ENCODE measurements at regions of chr9 and their contacts with region 1.

Region 1: DNA sequence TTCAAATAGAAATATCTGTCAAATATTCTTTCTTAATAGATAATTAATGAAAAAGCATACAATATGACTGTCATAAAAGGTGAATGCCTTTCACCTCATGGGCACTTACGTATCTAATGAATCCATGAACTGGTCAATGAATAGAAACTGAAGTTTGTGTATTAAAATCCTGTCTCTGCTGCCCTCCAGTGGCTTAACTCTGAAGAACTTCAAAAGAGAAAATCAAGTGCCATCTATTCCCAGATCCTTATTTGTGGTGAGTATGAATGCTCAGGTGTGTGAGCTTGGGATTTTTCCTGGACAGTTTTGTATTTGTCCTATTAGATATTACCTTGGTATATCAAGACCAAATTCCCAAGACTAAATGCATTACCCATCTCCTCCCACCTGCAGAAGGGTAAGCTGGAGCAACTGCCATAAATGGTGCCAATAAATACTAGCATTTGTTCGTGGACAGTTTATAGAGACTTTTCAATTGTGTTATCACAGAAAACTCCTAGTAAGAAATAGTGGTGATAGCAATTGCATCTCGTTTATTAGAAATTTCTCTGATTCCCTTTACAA is 44.0 kb upstream of the SVEP1 start:
- DNase-seq: peak; percentile 28
- ATAC-seq: peak; percentile 38
- H3K4me3 ChIP-seq: no peak overlapping the region
- H3K27ac ChIP-seq: no peak overlapping the region
- H3K4me1 ChIP-seq: peaks cover 6% of the 10 kb centered on the region
- H3K27me3 ChIP-seq: no peaks in the 10 kb centered on the region; a peak in 1 of 4 replicates
- CTCF ChIP-seq: peak; percentile 46 to 74 (median 55); a peak in 5 of 6 replicates
- EP300 ChIP-seq: no peak
- POLR2A ChIP-seq: no peak
- RAD21 ChIP-seq: peak; percentile 76

Region 2: DNA sequence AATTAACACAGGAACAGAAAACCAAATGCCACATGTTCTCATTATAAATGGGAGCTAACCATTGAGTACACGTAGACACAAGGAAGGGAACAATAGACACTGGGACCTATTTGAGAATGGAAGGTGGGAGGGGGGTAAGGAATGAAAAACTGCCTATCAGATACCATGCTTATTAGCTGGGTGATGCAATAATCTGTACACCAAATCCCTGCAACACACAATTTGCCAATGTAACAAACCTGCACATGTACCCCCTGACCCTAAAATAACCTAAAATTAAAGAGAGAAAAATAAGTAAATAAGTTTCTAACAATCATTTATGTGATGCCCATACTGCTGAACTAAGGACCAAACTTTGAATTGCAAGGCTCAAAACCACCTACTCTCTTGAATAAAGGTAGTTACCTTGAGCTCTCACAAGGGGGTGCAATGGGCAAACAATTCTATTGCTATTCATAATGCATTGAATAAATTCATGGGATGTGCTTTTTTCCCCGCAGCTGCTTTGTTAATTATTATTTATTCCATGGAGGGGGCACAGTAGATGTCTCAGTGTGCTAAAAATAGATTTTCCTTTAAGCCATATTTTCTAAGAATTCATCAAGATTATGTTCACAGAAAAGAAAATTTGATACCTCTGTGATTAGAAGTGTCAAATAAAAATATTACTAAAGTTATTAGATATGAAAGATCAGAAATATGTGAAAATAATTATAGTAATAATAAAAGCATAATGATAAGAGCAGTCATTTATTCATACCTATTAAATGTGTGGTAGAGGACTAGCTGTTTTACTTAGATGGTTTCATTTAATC is 1049.3 kb before region 1 on chr9:
- CTCF ChIA-PET with region 1: no interaction called
- POLR2A ChIA-PET with region 1: no interaction called
- RAD21 ChIA-PET with region 1: no interaction called
- SMC1A ChIA-PET with region 1: no interaction called
- in situ Hi-C with region 1: no loop called
- intact Hi-C with region 1: loop called (anchors 5 kb)
- DNase-seq: peak; percentile 5
- ATAC-seq: peak; percentile 80
- H3K4me3 ChIP-seq: no peak overlapping the region
- H3K27ac ChIP-seq: no peak overlapping the region
- H3K4me1 ChIP-seq: no peaks in the 10 kb centered on the region
- H3K27me3 ChIP-seq: no peaks in the 10 kb centered on the region
- CTCF ChIP-seq: peak; percentile 58 to 67 (median 58); a peak in 5 of 6 replicates
- EP300 ChIP-seq: no peak
- POLR2A ChIP-seq: no peak
- RAD21 ChIP-seq: peak; percentile 85

Region 3: DNA sequence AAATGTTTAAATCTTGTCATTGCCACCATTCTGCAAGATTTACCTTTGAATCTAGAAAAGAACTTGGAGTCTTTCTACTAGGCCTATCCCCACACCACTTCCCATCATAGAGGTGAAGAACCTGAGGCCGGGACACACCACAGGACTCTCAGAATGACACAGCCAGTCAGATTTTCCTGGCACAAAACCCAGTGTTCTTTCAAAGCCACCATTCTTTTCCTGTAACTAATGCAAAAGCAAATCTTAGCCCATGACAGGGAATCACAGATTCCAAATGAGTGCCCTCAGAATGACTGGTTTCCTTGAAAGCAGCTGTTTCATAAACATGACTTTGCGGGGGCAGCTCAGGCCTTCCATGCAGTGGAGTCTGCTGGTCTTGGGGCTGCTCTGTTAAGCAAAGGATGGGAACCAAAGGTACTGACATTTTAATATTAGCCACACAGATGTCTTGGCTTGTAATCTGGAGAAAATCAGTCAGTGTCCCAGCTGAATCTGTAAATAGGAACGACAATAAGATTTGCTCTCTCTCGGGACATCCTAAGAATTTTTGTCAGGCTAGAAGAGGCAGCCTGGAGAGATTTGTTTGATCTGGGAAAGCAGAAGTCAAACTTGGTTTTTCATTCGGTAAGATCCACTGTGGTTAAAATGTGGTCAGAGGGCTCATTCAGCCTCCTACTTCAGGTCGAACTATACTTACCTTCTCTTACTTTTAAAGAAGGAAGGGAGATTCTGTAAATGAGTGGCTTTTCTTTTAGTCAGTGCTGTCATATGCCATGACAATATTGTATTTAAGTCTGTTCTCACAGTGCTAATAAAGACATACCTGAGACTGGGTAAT is 728.4 kb before region 1 on chr9:
- CTCF ChIA-PET with region 1: interaction called, 3 read pairs
- POLR2A ChIA-PET with region 1: no interaction called
- RAD21 ChIA-PET with region 1: no interaction called
- SMC1A ChIA-PET with region 1: no interaction called
- in situ Hi-C with region 1: loop called (anchors 25 kb)
- intact Hi-C with region 1: loop called (anchors 10 kb)
- DNase-seq: peak; percentile 68
- ATAC-seq: peak; percentile 86
- H3K4me3 ChIP-seq: peak overlapping the region; percentile 9
- H3K27ac ChIP-seq: peak overlapping the region; percentile 74
- H3K4me1 ChIP-seq: peaks cover 23% of the 10 kb centered on the region
- H3K27me3 ChIP-seq: no peaks in the 10 kb centered on the region
- CTCF ChIP-seq: no peak
- EP300 ChIP-seq: peak in 1 of 2 experiments; percentile 13; a peak in 1 of 4 replicates
- POLR2A ChIP-seq: no peak
- RAD21 ChIP-seq: no peak

Region 4: DNA sequence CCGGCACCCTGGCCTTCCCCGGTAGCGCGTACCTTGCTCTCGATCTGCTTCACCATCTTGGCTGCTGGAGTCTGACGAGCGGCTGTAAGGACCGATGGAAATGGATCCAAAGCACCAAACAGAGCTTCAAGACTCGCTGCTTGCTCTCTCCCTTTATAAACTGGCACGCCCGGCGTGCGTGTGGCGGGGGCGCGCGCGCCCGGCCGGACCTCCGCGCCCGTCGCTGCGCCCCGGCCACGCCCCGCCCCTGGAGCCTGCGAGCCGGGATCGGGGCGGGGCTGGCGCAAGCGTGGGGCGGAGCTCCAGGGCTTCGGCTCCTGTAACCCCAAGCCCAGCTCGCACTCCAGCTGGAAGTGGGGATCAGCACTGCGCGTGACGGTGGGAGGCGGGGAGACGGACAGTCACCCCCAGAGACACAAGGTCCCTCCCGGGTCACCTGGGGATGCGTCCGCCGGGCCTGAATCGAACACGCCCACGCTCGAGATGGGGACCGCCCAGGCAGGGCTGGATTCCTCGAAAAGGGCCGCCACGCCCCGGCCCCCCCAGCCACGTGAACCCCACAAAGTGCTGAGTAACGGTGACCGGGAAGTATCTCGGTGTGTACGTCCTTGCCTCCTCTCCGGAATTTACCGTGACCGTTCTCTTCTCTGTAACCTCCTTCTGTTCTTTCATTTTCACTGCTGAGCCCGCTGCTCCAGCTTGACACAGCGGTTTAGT is 367.0 kb before region 1 on chr9 and contains the start of gene TXN:
- CTCF ChIA-PET with region 1: interaction called, 7 read pairs
- POLR2A ChIA-PET with region 1: no interaction called
- RAD21 ChIA-PET with region 1: interaction called, 8 read pairs
- SMC1A ChIA-PET with region 1: interaction called, 3 read pairs
- in situ Hi-C with region 1: no loop called
- intact Hi-C with region 1: loop called (anchors 10 kb)
- DNase-seq: peak; percentile 87
- ATAC-seq: peak; percentile 69
- H3K4me3 ChIP-seq: peak within 1 kb of the TSS; percentile 92
- H3K27ac ChIP-seq: peak within 1 kb of the TSS; percentile 91
- H3K4me1 ChIP-seq: peaks cover 24% of the 10 kb centered on the region
- H3K27me3 ChIP-seq: no peaks in the 10 kb centered on the region
- CTCF ChIP-seq: no peak
- EP300 ChIP-seq: peak; percentile 41 to 47; a peak in 1 of 4 replicates
- POLR2A ChIP-seq: peak; percentile 99
- RAD21 ChIP-seq: no peak
- polyA plus RNA-seq, gene TXN: 2,263 to 2,304 TPM

Region 5: DNA sequence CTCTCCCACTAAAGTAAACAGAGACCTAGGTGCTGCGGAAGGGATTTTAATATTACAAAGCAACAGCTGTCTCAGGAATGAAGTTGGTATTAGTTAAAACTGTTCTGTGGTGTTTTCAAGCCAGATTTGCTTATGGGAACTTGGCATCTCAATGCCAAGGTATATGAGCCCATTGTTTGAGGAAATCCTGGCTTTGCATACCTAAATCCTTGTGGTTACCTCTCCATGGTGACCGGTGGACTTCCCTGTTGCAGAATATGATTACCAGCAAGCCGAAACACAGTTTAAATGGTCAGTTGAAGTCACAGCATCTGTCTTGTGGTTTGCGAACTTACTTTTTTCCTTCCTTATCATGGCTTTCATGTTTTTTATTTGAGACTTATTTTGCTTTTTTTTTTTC is 223.6 kb before region 1 on chr9:
- CTCF ChIA-PET with region 1: no interaction called
- POLR2A ChIA-PET with region 1: no interaction called
- RAD21 ChIA-PET with region 1: no interaction called
- SMC1A ChIA-PET with region 1: no interaction called
- in situ Hi-C with region 1: no loop called
- intact Hi-C with region 1: no loop called
- DNase-seq: no peak
- ATAC-seq: no peak
- H3K4me3 ChIP-seq: no peak overlapping the region
- H3K27ac ChIP-seq: no peak overlapping the region
- H3K4me1 ChIP-seq: no peaks in the 10 kb centered on the region
- H3K27me3 ChIP-seq: no peaks in the 10 kb centered on the region
- CTCF ChIP-seq: no peak
- EP300 ChIP-seq: no peak
- POLR2A ChIP-seq: no peak
- RAD21 ChIP-seq: no peak

Region 6: GRCh38 chr9:110452227-110452801 is 171.2 kb before region 1 on chr9:
- CTCF ChIA-PET with region 1: interaction called, 27 read pairs
- POLR2A ChIA-PET with region 1: no interaction called
- RAD21 ChIA-PET with region 1: interaction called, 4 read pairs
- SMC1A ChIA-PET with region 1: interaction called, 5 read pairs
- in situ Hi-C with region 1: loop called (anchors 5 kb)
- intact Hi-C with region 1: loop called (anchors 1 kb)
- DNase-seq: no peak
- ATAC-seq: no peak; the same call in 2 of the 3 replicates
- H3K4me3 ChIP-seq: no peak overlapping the region
- H3K27ac ChIP-seq: no peak overlapping the region
- H3K4me1 ChIP-seq: no peaks in the 10 kb centered on the region
- H3K27me3 ChIP-seq: no peaks in the 10 kb centered on the region
- CTCF ChIP-seq: peak in 2 of 3 experiments; percentile 34 to 47; a peak in 3 of 6 replicates
- EP300 ChIP-seq: no peak
- POLR2A ChIP-seq: no peak
- RAD21 ChIP-seq: peak; percentile 18; the same call in 1 of the 2 replicates

Region 7: GRCh38 chr9:110575181-110575580 is 48.4 kb before region 1 on chr9:
- CTCF ChIA-PET with region 1: no interaction called
- POLR2A ChIA-PET with region 1: no interaction called
- RAD21 ChIA-PET with region 1: no interaction called
- SMC1A ChIA-PET with region 1: no interaction called
- in situ Hi-C with region 1: no loop called
- intact Hi-C with region 1: no loop called
- DNase-seq: no peak
- ATAC-seq: no peak
- H3K4me3 ChIP-seq: no peak overlapping the region
- H3K27ac ChIP-seq: no peak overlapping the region
- H3K4me1 ChIP-seq: no peaks in the 10 kb centered on the region
- H3K27me3 ChIP-seq: peaks cover 6 to 9% of the 10 kb centered on the region in 2 experiments
- CTCF ChIP-seq: no peak
- EP300 ChIP-seq: no peak
- POLR2A ChIP-seq: no peak
- RAD21 ChIP-seq: no peak

Region 8: DNA sequence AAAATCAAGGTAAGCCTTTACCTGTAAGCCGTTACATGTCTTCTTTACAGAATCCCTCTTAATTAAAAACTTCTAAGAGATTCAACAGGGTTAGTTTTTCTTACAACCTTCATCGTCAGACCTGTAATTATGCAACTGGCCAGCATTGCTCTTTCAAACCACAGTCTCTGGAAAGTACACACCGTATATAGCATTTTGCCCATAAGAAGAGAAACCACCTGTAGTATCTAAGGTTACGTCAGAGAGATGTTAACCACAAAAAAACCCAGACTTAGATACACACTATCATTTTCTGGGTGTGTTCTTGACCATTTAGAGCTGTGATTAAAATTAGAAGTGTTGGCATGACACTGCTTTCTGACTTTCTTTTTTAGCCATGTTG is 185.0 kb after region 1 on chr9:
- CTCF ChIA-PET with region 1: interaction called, 3 read pairs
- POLR2A ChIA-PET with region 1: no interaction called
- RAD21 ChIA-PET with region 1: no interaction called
- SMC1A ChIA-PET with region 1: interaction called, 3 read pairs
- in situ Hi-C with region 1: no loop called
- intact Hi-C with region 1: loop called (anchors 1 kb)
- DNase-seq: peak; percentile 93
- ATAC-seq: peak; percentile 90
- H3K4me3 ChIP-seq: 0 out of 2 replicates have a peak overlapping the region, but pooled peaks have one; percentile 28
- H3K27ac ChIP-seq: peak overlapping the region; percentile 90
- H3K4me1 ChIP-seq: peaks cover 18% of the 10 kb centered on the region
- H3K27me3 ChIP-seq: no peaks in the 10 kb centered on the region
- CTCF ChIP-seq: no peak
- EP300 ChIP-seq: peak; percentile 97 to 98
- POLR2A ChIP-seq: no peak
- RAD21 ChIP-seq: no peak; the same call in 1 of the 2 replicates

Region 9: DNA sequence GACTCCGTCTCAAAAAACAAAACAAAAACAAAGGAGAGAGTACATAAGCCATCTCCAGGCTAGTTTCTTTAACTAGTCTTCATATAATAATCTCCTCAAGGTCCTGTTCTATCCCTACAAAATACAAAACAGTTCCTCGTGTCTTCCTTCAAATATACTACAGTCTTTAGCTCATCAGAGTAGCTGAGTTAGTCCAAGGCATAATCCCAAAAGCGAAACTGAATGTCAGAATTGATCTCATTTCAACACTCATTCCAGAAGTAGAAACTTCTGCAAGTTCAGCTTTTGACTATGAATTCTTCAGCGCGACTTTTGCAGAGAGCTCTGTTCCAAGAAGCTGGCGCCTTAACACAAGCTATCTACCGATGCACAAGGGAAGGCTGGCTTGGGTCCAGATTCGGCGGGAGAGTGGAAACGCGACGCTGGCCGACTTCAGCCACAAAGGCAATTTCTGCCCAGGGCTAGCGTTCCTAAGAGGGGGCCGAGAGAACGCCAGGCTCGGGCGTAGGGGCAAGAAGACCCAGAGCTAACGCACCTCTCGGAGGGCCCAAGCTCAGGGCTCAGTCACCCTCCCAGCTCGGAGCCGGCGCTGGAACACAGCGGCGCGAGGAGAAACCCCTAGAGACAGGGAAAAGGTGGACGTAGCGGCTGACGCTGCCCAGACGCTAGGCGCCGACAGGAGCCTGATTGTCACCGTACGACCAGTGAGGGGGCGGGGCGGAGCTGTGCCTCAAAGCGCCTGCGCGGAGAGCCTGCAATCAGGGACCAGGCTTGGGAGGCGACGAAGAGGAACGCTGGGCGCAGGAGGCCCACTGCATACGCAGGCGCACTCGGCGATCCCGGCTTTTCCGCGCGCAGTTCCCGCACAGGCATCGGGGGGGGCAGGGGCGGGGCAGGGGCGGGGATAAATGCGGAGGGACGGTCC is 1755.9 kb after region 1 on chr9:
- CTCF ChIA-PET with region 1: no interaction called
- POLR2A ChIA-PET with region 1: no interaction called
- RAD21 ChIA-PET with region 1: no interaction called
- SMC1A ChIA-PET with region 1: no interaction called
- in situ Hi-C with region 1: no loop called
- intact Hi-C with region 1: no loop called
- DNase-seq: peak; percentile 94
- ATAC-seq: peak; percentile 92
- H3K4me3 ChIP-seq: peak overlapping the region; percentile 88
- H3K27ac ChIP-seq: peak overlapping the region; percentile 95
- H3K4me1 ChIP-seq: peaks cover 17% of the 10 kb centered on the region
- H3K27me3 ChIP-seq: no peaks in the 10 kb centered on the region
- CTCF ChIP-seq: no peak
- EP300 ChIP-seq: no peak
- POLR2A ChIP-seq: peak; percentile 86
- RAD21 ChIP-seq: no peak

Measured in GM12878 (cell line).